CD8-positive, alpha-beta memory T cell (primary cell): ENCODE measurements at regions of chr2 and their contacts with region 1.

Region 1: DNA sequence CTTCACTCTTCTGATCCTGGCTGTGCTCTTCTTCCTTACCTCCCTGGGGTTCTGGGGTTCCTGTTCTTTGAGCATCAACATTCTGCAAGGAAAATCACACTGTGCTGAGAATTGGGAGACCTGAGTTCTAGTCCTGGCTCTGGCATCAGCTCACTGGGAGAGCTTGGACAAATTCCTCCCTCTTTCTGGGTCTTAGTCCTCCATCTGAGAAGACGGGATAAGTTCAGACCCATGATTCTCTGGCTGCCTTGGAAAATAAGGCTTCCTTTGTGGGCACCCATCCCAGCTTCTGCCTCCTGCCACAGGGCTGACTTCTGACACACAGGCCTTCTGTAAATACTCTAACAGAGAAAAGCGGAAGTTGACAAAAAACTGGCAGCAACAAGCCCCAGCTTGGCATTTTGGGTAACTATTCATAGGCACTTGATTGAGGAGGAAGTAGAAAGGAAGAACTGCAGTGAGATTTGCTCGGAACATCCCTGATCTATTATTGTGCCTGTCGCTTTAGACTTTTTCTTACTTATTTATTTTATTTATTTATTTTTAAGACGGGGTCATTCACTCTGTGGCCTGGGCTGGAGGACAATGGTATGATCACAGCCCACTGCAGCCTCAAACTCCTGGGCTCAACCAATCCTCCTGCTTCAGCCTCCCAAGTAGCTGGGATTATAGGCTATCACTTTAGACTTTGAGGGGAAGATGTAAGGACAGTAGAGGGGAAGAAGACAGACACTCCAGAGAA is 7.9 kb downstream of the PCBP1 start:
- DNase-seq: peak in 4 of 5 donors; percentile 27 to 76 (median 64)
- H3K4me3 ChIP-seq: peak overlapping the region; percentile 54
- H3K4me3 Mint-ChIP-seq: peak overlapping the region; percentile 72 to 91 (median 78)
- H3K27ac ChIP-seq: peak overlapping the region; percentile 36
- H3K27ac Mint-ChIP-seq: peak overlapping the region; percentile 89 to 99 (median 96)
- H3K4me1 ChIP-seq: peaks cover 45% of the 10 kb centered on the region
- H3K4me1 Mint-ChIP-seq: peaks cover 44 to 50% (median 49%) of the 10 kb centered on the region in 3 donors
- H3K27me3 ChIP-seq: no peaks in the 10 kb centered on the region
- H3K27me3 Mint-ChIP-seq: peaks cover 0 to 1% of the 10 kb centered on the region in 2 donors

Region 2: DNA sequence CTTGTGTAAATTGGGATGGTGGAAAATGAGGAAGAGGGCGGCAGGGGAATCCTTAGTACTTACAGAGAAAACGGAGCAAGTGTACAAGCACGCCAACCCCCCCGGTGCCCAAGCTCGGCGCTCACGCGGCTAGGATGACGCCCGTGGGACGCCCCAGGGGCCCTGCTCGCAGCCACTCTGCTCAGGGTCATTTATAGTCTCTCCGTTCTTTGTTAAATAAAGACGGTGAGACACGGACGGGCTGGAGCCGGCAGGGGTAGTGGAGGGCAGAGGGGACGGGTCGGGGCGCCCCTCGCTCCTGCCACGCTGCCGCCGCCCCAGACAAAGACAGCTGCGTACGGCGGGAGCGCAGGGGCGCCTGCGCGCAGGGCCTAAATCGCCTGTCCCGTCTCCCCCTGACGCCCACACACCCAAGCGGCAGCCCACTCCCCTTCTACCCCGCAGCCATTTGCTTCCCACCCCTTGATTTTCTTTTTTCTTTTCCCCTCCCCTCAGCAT is 29.9 kb after region 1 on chr2:
- CTCF ChIA-PET with region 1: interaction called, 14 read pairs
- POLR2A ChIA-PET with region 1: interaction called, 168 read pairs
- DNase-seq: peak in 4 of 5 donors; percentile 45 to 79 (median 62)
- H3K4me3 ChIP-seq: peak overlapping the region; percentile 84
- H3K4me3 Mint-ChIP-seq: peak overlapping the region; percentile 86 to 98 (median 95)
- H3K27ac ChIP-seq: peak overlapping the region; percentile 90
- H3K27ac Mint-ChIP-seq: peak overlapping the region; percentile 98 to 100 (median 100)
- H3K4me1 ChIP-seq: peaks cover 63% of the 10 kb centered on the region
- H3K4me1 Mint-ChIP-seq: peaks cover 61 to 82% (median 81%) of the 10 kb centered on the region in 3 donors
- H3K27me3 ChIP-seq: no peaks in the 10 kb centered on the region
- H3K27me3 Mint-ChIP-seq: peaks cover 0 to 6% of the 10 kb centered on the region in 2 donors

Region 3: DNA sequence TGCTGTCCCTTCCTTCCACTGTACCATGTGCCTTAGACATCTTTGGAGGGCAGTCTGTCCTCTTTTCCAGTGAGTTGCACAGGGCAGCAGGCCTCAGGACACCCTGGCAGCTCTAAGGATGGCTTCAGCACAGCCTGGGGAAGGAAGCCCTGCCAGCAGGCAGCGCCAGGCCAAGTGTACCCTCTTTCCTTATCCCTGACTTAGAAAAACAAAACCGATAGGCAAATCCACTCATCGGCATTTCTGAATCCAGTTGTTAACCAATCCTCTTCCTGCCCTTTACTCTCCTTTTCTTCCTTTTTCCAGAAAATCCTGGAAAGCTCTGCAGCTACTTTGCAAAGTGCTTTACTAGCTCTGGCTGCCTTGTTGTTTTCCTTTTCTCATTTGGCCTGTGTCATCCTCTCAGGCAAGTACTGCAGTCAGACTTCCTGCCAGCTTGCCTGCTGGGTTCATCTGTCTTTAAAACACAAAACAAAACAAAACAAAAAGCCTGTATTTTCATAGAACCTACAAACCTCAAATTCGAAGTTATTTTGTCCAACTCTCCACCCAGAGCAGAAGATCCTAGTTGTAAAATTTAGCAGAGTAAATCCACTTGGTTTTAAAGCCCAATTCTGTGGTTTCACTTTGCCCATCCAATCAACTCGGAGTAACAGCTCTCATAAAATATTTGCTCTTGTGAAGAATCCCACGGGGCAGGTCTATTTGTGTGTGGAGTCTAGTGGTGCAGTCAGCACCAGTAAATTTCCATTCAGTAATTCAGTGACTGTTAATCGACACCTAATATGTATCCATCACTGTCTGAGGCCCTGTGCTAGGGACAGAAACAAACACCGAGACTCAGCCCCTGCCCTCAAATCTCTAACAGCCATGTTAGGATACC is 37.3 kb after region 1 on chr2:
- CTCF ChIA-PET with region 1: interaction called, 54 read pairs
- POLR2A ChIA-PET with region 1: interaction called, 168 read pairs
- DNase-seq: peak in 4 of 5 donors; percentile 19 to 72 (median 56)
- H3K4me3 ChIP-seq: peak overlapping the region; percentile 57
- H3K4me3 Mint-ChIP-seq: peak overlapping the region; percentile 75 to 91 (median 84)
- H3K27ac ChIP-seq: peak overlapping the region; percentile 79
- H3K27ac Mint-ChIP-seq: peak overlapping the region; percentile 94 to 99 (median 96)
- H3K4me1 ChIP-seq: peaks cover 86% of the 10 kb centered on the region
- H3K4me1 Mint-ChIP-seq: peaks cover 66 to 86% (median 85%) of the 10 kb centered on the region in 3 donors
- H3K27me3 ChIP-seq: no peaks in the 10 kb centered on the region
- H3K27me3 Mint-ChIP-seq: no peaks in the 10 kb centered on the region

Region 4: DNA sequence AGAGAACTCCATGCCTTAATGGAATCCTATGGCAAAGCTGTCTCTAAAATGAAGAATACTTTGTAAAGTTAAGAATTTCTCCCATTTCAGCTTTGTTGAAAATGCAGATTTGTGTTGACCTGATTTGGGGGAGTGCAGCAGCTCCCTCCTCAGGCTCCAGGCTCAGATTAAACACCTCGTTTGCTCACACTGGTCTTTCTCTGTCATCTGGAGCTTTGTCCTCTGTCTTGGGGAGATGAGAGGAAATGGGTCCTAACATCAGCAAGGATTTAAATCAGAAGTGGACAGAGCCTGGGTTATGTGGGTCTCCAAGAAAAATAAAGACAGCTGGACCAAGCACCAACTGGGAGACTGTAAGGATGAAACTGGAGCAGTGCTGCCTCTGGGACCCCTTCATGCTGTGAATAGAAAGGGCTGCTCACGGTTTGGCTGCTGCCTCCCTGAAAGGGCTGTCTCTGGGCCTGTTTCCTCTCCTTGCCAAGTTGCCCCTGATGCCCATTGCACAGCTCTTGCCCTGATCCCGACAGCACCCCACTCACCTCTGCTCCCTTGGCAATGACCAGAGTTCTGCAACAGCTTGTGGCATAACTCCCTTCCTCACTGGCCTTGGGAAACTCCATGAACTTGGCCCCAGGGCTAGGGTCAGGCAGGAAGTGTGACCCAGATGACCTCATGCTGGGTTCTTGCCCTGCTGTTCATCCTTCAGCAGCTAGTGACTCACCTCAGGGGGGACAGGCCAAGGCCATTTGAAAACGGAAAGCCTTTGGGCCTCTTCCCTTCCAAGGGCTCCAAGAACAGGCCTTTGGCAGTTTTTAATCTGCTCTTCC is 1855.3 kb after region 1 on chr2:
- CTCF ChIA-PET with region 1: no interaction called
- POLR2A ChIA-PET with region 1: no interaction called
- DNase-seq: no peak
- H3K4me3 ChIP-seq: no peak overlapping the region
- H3K4me3 Mint-ChIP-seq: no peak overlapping the region
- H3K27ac ChIP-seq: no peak overlapping the region
- H3K27ac Mint-ChIP-seq: no peak overlapping the region
- H3K4me1 ChIP-seq: no peaks in the 10 kb centered on the region
- H3K4me1 Mint-ChIP-seq: no peaks in the 10 kb centered on the region
- H3K27me3 ChIP-seq: no peaks in the 10 kb centered on the region
- H3K27me3 Mint-ChIP-seq: peaks cover 11 to 16% of the 10 kb centered on the region in 2 donors